ENCODE measurements at regions of chr11 and their contacts with region 1.

Region 1: GRCh38 chr11:64317957-64318693 is at the start of gene PRDX5:
- DNase-seq: peak; percentile 84 to 98 (median 94)
- ATAC-seq: peak; percentile 77 to 85 (median 82)
- H3K4me3 ChIP-seq: peak within 1 kb of the TSS; percentile 76 to 79
- H3K4me3 Mint-ChIP-seq: peak within 1 kb of the TSS; percentile 91 to 96 (median 93)
- H3K27ac ChIP-seq: peak within 1 kb of the TSS; percentile 98
- H3K27ac Mint-ChIP-seq: peak within 1 kb of the TSS; percentile 99 to 100
- H3K4me1 ChIP-seq: peaks cover 2 to 36% of the 10 kb centered on the region in 2 experiments
- H3K4me1 Mint-ChIP-seq: peaks cover 22 to 50% (median 36%) of the 10 kb centered on the region in 3 donors
- H3K27me3 ChIP-seq: no peaks in the 10 kb centered on the region
- H3K27me3 Mint-ChIP-seq: no peaks in the 10 kb centered on the region
- total RNA-seq, gene PRDX5: 35.8 to 86.7 (median 71.7) TPM

Region 2: GRCh38 chr11:64185816-64186498 is 132.2 kb before region 1 on chr11 and contains the start of gene STIP1:
- CTCF ChIA-PET with region 1: interaction called in 1 of 2 experiments, 11 read pairs
- POLR2A ChIA-PET with region 1: interaction called in 1 of 2 experiments, 5 read pairs
- DNase-seq: peak; percentile 96 to 100 (median 99)
- ATAC-seq: peak; percentile 87 to 90 (median 88)
- H3K4me3 ChIP-seq: peak within 1 kb of the TSS; percentile 73 to 89
- H3K4me3 Mint-ChIP-seq: peak within 1 kb of the TSS in 2 of 3 donors; percentile 92 to 99
- H3K27ac ChIP-seq: peak within 1 kb of the TSS; percentile 40
- H3K27ac Mint-ChIP-seq: peak within 1 kb of the TSS; percentile 94 to 99
- H3K4me1 ChIP-seq: peaks cover 6 to 38% of the 10 kb centered on the region in 2 experiments
- H3K4me1 Mint-ChIP-seq: peaks cover 38 to 43% (median 42%) of the 10 kb centered on the region in 3 donors
- H3K27me3 ChIP-seq: no peaks in the 10 kb centered on the region
- H3K27me3 Mint-ChIP-seq: no peaks in the 10 kb centered on the region
- total RNA-seq, gene STIP1: 61.1 to 133 (median 107) TPM

Region 3: DNA sequence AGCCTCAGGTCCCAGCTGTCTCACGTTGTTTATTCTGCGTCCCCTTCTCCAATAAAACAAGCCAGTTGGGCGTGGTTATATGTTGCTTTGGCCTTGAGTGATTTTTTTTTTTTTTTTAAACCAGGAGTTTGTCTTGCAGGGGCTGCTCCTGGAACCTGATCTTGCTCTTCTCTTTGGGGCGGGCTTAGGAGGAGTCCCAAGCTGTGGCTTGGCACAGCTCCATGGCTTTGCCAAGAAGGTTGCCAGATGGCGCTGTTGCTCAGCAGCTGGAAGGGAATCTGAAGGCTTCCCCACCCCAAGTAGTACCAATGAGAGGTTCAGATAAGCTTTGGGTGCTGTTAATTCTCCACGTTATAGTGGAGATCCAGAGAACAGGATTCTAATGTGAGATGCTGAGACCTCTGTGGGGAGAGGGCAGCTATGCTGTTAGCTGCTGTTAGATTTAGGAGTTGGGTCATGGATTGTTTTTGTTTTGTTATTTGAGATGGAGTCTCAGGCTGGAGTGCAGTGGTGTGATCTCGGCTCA is 113.6 kb before region 1 on chr11:
- CTCF ChIA-PET with region 1: interaction called in 1 of 2 experiments, 19 read pairs
- POLR2A ChIA-PET with region 1: interaction called in 1 of 2 experiments, 6 read pairs
- DNase-seq: peak; percentile 68 to 95 (median 83)
- ATAC-seq: peak; percentile 46 to 70 (median 48)
- H3K4me3 ChIP-seq: no peak overlapping the region
- H3K4me3 Mint-ChIP-seq: peak overlapping the region; percentile 17 to 68 (median 65)
- H3K27ac ChIP-seq: no peak overlapping the region
- H3K27ac Mint-ChIP-seq: peak overlapping the region; percentile 85 to 87
- H3K4me1 ChIP-seq: peaks cover 14 to 49% of the 10 kb centered on the region in 2 experiments
- H3K4me1 Mint-ChIP-seq: peaks cover 36 to 47% (median 47%) of the 10 kb centered on the region in 3 donors
- H3K27me3 ChIP-seq: no peaks in the 10 kb centered on the region
- H3K27me3 Mint-ChIP-seq: no peaks in the 10 kb centered on the region

Region 4: GRCh38 chr11:64304316-64305072 is 13.6 kb before region 1 on chr11:
- CTCF ChIA-PET with region 1: interaction called in 1 of 2 experiments, 35 read pairs
- POLR2A ChIA-PET with region 1: interaction called, 5 to 12 read pairs
- DNase-seq: peak; percentile 77 to 96 (median 90)
- ATAC-seq: peak; percentile 24 to 33 (median 31)
- H3K4me3 ChIP-seq: peak overlapping the region; percentile 88 to 89
- H3K4me3 Mint-ChIP-seq: peak overlapping the region; percentile 86 to 99 (median 92)
- H3K27ac ChIP-seq: peak overlapping the region; percentile 93
- H3K27ac Mint-ChIP-seq: peak overlapping the region; percentile 94
- H3K4me1 ChIP-seq: peaks cover 15 to 56% of the 10 kb centered on the region in 2 experiments
- H3K4me1 Mint-ChIP-seq: peaks cover 36 to 40% (median 38%) of the 10 kb centered on the region in 3 donors
- H3K27me3 ChIP-seq: peaks cover 0 to 45% of the 10 kb centered on the region in 2 experiments
- H3K27me3 Mint-ChIP-seq: peaks cover 10 to 23% of the 10 kb centered on the region in 2 donors

Region 5: DNA sequence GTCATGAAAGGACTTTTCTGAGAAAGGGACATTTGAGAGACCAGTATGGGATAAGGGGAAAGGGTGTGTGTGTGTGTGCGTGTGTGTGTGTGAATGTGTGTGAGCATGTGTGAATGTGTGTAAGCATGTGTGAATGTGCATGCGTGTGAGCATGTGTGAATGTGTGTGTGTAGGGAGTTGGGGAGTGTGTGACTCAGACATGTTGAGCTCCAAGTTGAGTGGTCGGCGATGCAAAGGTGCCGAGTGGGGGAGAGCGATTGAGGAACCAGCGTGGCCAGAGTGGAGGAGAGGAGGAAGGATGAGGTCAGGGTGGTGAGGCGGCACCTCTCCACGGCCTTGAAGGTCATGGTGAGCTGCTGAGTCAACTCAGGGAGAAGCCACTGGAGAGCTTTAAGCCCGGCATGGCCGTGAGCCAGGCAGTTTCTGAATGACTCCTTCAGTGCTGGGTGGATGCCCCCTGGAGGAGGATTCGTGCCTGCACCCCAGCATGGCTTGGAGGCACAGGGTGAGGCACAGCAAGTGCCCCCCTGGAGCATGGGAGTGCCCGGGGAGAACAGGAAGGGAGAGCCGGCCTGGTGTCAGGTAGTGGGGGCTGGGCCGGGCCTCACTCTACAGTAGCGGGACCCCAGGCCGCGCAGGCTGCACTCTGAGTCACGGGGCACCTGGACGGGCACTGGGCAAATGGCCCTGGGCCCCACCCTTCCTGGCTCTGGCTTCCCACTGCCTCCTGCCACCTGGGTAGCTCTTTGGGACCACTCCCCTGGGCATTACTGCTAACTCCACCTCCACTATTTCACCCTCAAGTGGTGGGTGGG is 13.6 kb after region 1 on chr11:
- CTCF ChIA-PET with region 1: interaction called, 4 to 41 read pairs
- POLR2A ChIA-PET with region 1: interaction called in 1 of 2 experiments, 3 read pairs
- DNase-seq: peak in 34 of 35 experiments; percentile 40 to 80 (median 62)
- ATAC-seq: peak; percentile 78 to 93 (median 88)
- H3K4me3 ChIP-seq: no peak overlapping the region
- H3K4me3 Mint-ChIP-seq: no peak overlapping the region
- H3K27ac ChIP-seq: no peak overlapping the region
- H3K27ac Mint-ChIP-seq: peak overlapping the region; percentile 4 to 21
- H3K4me1 ChIP-seq: peaks cover 0 to 18% of the 10 kb centered on the region in 2 experiments
- H3K4me1 Mint-ChIP-seq: peaks cover 8 to 16% (median 8%) of the 10 kb centered on the region in 3 donors
- H3K27me3 ChIP-seq: no peaks in the 10 kb centered on the region
- H3K27me3 Mint-ChIP-seq: no peaks in the 10 kb centered on the region

Region 6: DNA sequence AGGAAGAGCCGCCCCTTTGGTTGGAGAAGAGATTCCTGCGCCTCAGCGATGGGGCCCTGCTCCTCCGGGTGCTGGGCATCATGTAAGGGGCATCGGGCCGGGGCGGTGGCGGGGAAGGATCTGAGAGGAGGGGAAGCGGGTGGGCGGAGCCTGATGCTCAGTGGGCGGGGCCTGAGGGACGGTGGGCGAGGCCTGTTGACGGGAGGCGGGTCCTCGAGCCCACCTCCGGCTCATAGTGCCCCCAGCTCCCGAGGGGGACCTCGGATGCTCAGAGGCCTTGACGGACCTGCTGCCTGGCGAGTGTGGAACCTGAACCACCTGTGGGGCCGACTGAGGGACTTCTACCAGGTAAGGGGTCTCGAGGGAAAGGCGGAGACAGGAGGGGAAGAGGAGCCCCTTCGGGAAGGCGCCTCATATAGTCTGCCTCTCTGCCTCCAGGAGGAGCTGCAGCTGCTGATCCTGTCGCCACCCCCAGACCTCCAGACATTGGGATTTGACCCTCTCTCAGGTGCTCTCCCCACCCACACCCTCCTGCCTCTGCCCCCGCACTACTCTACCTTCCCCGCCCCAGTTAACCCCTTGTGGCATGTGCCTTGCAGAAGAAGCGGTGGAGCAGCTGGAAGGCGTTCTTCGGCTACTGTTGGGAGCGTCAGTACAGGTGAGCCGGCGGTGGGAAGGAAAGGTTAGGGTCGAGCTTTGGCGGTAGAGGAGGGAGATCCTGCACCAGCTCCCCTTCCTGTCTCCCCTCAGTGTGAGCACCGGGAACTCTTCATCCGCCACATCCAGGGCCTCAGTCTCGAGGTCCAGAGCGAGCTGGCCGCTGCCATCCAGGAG is 22.8 kb after region 1 on chr11:
- CTCF ChIA-PET with region 1: interaction called in 1 of 2 experiments, 14 read pairs
- POLR2A ChIA-PET with region 1: interaction called, 6 read pairs
- DNase-seq: peak; percentile 22 to 83 (median 62)
- ATAC-seq: peak; percentile 48 to 58 (median 56)
- H3K4me3 ChIP-seq: peak overlapping the region; percentile 72
- H3K4me3 Mint-ChIP-seq: peak overlapping the region; percentile 82 to 92 (median 83)
- H3K27ac ChIP-seq: peak overlapping the region; percentile 89
- H3K27ac Mint-ChIP-seq: peak overlapping the region; percentile 94 to 95
- H3K4me1 ChIP-seq: peaks cover 14 to 58% of the 10 kb centered on the region in 2 experiments
- H3K4me1 Mint-ChIP-seq: peaks cover 37 to 48% (median 46%) of the 10 kb centered on the region in 3 donors
- H3K27me3 ChIP-seq: no peaks in the 10 kb centered on the region
- H3K27me3 Mint-ChIP-seq: no peaks in the 10 kb centered on the region

Region 7: DNA sequence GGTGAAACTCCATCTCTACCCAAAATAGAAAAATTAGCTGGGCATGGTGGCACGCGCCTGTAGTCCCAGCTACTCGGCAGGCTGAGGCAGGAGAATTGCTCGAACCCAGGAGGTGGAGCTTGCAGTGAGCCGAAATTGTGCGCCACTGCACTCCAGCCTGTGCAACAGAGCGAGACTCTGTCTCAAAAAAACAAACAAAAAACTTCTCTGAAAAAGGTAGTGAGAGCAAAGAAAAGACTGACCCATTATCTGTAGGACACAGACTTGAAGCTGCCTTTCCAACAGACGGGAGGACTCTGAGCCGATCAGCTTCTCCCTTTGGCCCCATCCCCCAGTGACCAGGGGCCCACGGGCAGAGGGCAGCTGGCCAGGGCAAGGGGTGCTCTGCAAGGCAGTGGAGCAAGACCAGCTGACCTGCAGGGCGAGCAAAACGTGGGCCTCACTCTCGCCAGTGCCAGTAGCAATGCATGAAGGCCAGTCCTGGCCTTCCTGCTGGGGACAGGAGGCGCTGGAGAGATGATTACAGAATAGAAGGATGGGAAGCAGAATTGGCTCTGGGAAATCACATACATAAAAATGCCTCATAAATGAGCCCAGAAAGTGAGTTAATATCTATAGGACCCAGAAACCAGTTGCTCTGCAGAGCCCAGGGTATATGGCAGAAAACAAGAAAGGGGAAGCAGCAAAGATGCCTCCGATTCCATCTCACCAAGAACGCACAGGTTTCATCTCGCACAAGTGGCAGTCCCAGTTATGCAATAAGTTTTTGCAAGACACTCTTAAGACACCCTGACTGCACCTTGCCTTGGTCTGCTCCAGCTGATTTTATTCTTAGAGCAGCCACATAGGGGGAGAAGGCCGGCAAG is 557.5 kb after region 1 on chr11:
- CTCF ChIA-PET with region 1: no interaction called
- POLR2A ChIA-PET with region 1: interaction called in 1 of 2 experiments, 16 read pairs
- DNase-seq: no peak
- ATAC-seq: no peak
- H3K4me3 ChIP-seq: peak overlapping the region; percentile 95 to 99
- H3K4me3 Mint-ChIP-seq: peak overlapping the region; percentile 99
- H3K27ac ChIP-seq: no peak overlapping the region
- H3K27ac Mint-ChIP-seq: peak overlapping the region; percentile 92 to 97
- H3K4me1 ChIP-seq: peaks cover 48 to 85% of the 10 kb centered on the region in 2 experiments
- H3K4me1 Mint-ChIP-seq: peaks cover 71 to 79% (median 76%) of the 10 kb centered on the region in 3 donors
- H3K27me3 ChIP-seq: no peaks in the 10 kb centered on the region
- H3K27me3 Mint-ChIP-seq: no peaks in the 10 kb centered on the region

Measured in T-cell (primary cell).